ENCODE measurements at regions of chr17 and their contacts with region 1.

Region 1: DNA sequence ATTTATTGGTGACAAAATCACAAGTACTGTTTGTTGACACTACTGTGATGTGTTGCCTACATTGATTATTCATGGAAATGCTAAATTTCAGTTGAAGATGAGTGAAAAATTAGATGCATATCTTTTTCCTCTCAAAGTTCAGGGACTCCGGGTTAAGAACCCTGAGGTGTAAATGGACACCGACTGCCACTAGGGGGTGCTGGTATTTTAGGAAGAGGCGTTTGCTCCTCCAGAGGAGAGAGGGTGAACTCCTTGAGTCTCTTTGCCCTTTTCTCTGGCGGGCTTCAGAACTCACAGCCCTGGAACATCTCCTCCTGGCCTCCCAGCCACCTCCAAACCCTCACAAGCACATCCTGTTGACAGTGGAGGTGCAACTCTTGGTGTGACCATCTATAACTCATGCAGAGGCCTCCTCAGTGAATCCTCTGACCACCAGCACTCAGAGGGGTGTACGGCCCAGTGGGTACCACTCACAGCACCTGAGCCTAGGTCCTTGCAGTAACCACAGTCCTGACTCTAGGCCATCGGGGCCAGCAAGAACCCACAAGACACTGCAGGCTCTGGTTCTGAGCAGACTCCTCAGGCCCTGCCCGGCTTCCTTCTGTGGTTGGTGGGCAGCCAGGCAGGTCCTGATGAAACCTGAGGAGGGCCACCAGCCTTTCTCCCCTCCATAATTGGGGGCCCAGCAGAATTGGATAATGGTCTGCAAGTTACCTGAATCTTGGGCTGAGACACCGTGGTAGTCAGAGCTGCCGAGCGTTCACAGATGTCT is 26.2 kb upstream of the PIK3R5 start:
- DNase-seq: peak; percentile 86
- H3K4me3 Mint-ChIP-seq: no peak overlapping the region
- H3K27ac Mint-ChIP-seq: no peak overlapping the region
- H3K4me1 Mint-ChIP-seq: peaks cover 5% of the 10 kb centered on the region
- H3K27me3 Mint-ChIP-seq: no peaks in the 10 kb centered on the region

Region 2: GRCh38 chr17:8935191-8935590 is 56.5 kb before region 1 on chr17:
- CTCF ChIA-PET with region 1: no interaction called
- intact Hi-C with region 1: no loop called
- DNase-seq: peak; percentile 91
- H3K4me3 Mint-ChIP-seq: peak overlapping the region; percentile 35
- H3K27ac Mint-ChIP-seq: peak overlapping the region; percentile 82
- H3K4me1 Mint-ChIP-seq: peaks cover 61% of the 10 kb centered on the region
- H3K27me3 Mint-ChIP-seq: no peaks in the 10 kb centered on the region

Region 3: DNA sequence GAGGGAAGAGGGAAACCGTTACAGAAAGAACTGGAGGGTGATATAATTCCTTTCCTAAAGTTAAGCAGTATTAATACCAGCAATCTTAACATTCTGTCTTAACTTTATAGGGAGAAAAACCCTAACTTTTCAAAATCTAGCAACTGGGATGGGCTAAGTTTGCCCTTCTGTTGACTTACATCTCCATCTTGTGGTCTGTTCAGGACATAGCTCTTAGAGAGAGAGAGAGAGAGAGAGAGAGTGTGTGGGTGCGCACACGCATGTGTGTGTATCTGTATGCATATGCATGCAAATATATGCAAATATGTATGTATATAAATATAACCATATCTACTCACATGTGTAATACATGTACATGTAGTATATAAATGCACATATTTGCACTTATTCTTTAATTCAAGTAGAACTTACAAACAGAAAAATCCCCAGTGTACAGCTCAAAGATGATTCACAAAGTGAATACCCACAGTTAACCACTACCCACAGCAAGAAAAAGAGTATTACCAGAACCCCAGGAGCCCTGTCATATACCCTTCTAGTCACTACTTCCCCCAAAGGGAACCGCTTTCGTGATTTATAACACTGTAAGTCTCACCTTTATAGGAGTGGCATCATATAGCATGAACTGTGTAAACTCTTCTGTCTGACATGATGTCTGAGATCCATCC is 537.5 kb after region 1 on chr17:
- CTCF ChIA-PET with region 1: interaction called, 3 read pairs
- intact Hi-C with region 1: loop called (anchors 2 kb)
- DNase-seq: peak; percentile 15
- H3K4me3 Mint-ChIP-seq: no peak overlapping the region
- H3K27ac Mint-ChIP-seq: no peak overlapping the region
- H3K4me1 Mint-ChIP-seq: peaks cover 10% of the 10 kb centered on the region
- H3K27me3 Mint-ChIP-seq: no peaks in the 10 kb centered on the region

Region 4: DNA sequence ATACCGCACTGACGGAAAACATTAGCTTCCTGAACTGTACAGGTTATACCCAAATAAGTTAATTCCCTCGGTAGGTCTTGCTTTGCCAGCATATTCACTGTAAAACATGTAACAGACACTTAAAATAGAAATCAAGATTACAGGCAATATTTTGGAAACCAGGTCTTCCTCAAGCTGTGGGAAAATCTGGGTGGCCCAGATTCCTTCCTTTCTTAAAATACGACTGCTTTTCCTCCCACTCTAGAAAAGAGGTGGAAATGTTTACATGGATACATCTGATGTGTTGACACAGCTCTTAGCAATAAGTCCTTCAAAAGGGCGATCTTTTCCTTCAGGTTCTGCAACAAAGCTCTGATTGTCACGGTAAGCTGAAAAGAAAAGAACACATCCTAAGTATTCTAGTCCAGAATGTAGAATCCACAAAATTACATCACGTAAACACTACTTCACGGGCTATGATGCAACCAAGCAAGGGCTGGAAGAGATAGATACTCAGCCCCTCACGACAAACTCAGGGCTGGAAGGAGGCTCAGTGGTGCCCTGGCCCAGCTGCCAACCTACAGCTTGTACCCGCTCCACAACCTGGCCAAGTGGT is 565.6 kb after region 1 on chr17:
- CTCF ChIA-PET with region 1: no interaction called
- intact Hi-C with region 1: loop called (anchors 10 kb)
- DNase-seq: no peak
- H3K4me3 Mint-ChIP-seq: no peak overlapping the region
- H3K27ac Mint-ChIP-seq: no peak overlapping the region
- H3K4me1 Mint-ChIP-seq: peaks cover under 1% of the 10 kb centered on the region
- H3K27me3 Mint-ChIP-seq: no peaks in the 10 kb centered on the region

Measured in activated naive CD4-positive, alpha-beta T cell treated with anti-CD3 and anti-CD28 coated beads for 36 hours (primary cell).